SK-N-SH (cell line): ENCODE measurements at regions of chr2 and their contacts with region 1.

Region 1: DNA sequence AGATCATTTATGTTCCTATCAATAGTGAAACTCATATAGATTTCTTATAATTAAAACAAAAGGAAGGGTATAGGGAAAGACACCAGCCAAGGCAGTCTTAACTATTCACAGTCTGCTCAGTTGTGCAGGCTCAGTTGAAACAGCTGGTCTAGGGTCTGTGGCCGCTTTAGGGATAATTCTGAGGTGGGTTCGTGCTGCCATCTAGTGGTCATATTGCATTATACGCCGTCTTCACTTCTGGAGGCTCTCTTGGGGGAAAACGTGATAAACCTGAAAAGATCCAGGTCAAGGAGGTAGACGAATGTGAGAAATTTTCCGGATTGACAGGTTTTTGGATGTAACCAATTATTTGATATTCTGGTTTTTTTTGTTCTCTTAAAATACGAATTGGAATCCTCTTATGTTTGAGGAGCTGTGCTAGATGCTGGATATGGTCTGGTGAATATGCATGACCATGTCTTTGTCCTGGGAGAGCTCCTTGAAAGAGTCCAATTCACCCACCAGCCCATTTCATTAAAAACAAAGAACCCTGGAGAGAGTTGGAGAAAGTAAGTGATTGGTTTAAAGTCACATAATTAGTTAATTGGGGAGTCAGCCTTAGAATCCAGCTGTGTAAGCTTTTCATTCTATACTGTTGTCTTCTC is 492.4 kb downstream of the PLCL1 start:
- DNase-seq: peak; percentile 73
- H3K4me3 ChIP-seq: no peak overlapping the region
- H3K27ac ChIP-seq: no peak overlapping the region
- H3K4me1 ChIP-seq: no peaks in the 10 kb centered on the region
- H3K27me3 ChIP-seq: no peaks in the 10 kb centered on the region; the same call in 1 of the 2 replicates
- CTCF ChIP-seq: peak; percentile 78
- EP300 ChIP-seq: no peak
- RAD21 ChIP-seq: peak; percentile 96

Region 2: DNA sequence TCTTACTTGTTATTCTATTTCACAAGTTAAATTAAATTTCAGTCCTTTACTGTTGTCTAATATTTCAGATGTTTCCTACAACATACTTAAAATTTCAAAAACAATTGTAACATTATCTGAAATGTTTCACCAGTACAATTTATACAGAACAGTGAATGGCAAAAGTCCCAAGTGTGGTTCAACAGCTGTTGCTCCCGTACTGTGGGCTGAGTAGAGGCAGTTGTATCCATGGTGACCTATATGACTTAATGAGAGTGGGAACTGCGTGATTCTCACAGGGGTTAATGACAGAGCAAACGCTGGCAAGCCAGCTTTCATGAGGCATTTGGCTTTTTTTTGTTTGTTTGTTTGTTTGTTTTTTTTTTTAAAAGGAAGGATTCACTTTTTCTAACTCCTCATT is 497.7 kb before region 1 on chr2:
- CTCF ChIA-PET with region 1: interaction called, 69 read pairs
- POLR2A ChIA-PET with region 1: no interaction called
- DNase-seq: no peak
- H3K4me3 ChIP-seq: no peak overlapping the region
- H3K27ac ChIP-seq: no peak overlapping the region
- H3K4me1 ChIP-seq: peaks cover 0 to 7% of the 10 kb centered on the region in 2 experiments; a peak in 2 of 4 replicates
- H3K27me3 ChIP-seq: no peaks in the 10 kb centered on the region
- CTCF ChIP-seq: no peak
- EP300 ChIP-seq: no peak
- RAD21 ChIP-seq: no peak

Region 3: DNA sequence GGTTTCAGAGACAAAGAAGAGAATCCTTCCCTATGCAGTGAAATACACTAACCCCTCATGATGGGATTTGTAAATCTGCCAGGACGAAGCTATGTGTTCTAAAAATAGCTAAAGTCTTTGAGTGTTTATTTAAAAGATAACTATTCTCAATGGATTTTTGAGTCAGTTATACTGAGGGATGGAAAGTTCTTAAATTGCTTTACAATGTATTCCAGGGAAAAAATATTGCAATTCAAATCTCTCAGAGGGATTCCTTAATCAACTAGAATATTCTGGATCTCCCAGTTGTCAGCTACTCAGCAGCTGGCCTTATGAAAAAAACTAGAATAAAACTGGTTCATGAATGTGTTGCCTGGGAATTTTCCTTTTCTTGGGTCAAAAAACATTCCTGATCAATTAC is 180.0 kb before region 1 on chr2:
- CTCF ChIA-PET with region 1: interaction called, 14 read pairs
- POLR2A ChIA-PET with region 1: no interaction called
- DNase-seq: no peak
- H3K4me3 ChIP-seq: no peak overlapping the region
- H3K27ac ChIP-seq: peak overlapping the region in 1 of 2 experiments; percentile 65; a peak in 2 of 4 replicates
- H3K4me1 ChIP-seq: peaks cover 11 to 15% of the 10 kb centered on the region in 2 experiments
- H3K27me3 ChIP-seq: no peaks in the 10 kb centered on the region
- CTCF ChIP-seq: no peak
- EP300 ChIP-seq: no peak
- RAD21 ChIP-seq: no peak

Region 4: GRCh38 chr2:198144660-198145059 is 152.1 kb before region 1 on chr2:
- CTCF ChIA-PET with region 1: interaction called, 12 read pairs
- POLR2A ChIA-PET with region 1: no interaction called
- DNase-seq: peak; percentile 58
- H3K4me3 ChIP-seq: no peak overlapping the region
- H3K27ac ChIP-seq: peak overlapping the region in 1 of 2 experiments; percentile 94; a peak in 2 of 4 replicates
- H3K4me1 ChIP-seq: peaks cover 0 to 14% of the 10 kb centered on the region in 2 experiments; a peak in 2 of 4 replicates
- H3K27me3 ChIP-seq: no peaks in the 10 kb centered on the region
- CTCF ChIP-seq: no peak
- EP300 ChIP-seq: peak; percentile 19 to 94; a peak in 2 of 4 replicates
- RAD21 ChIP-seq: peak; percentile 47

Region 5: DNA sequence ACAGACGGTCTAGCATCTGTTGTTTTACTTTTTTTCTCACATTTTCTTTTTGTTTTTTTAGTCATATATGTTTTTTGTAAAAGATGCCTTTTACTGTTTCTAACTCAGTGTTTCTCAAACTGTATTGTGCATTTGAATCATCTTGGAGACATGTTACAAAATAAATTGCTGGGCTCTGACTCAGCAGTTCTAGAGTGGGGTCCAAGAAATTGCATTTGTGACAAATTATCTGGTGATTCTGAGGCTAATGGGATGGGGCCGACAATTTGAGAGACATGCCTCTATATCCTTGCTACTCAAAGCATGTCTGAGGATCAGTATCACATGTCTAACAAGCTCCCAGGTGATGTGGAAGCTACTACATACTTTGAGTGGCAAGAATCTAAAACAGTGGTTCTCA is 13.6 kb before region 1 on chr2:
- CTCF ChIA-PET with region 1: interaction called, 17 read pairs
- POLR2A ChIA-PET with region 1: no interaction called
- DNase-seq: no peak
- H3K4me3 ChIP-seq: no peak overlapping the region
- H3K27ac ChIP-seq: no peak overlapping the region
- H3K4me1 ChIP-seq: peaks cover 0 to 2% of the 10 kb centered on the region in 2 experiments; a peak in 1 of 4 replicates
- H3K27me3 ChIP-seq: no peaks in the 10 kb centered on the region
- CTCF ChIP-seq: no peak
- EP300 ChIP-seq: no peak
- RAD21 ChIP-seq: no peak